Breast epithelium (tissue), 4 donors: ENCODE measurements at regions of chr11 and their contacts with region 1.

Region 1: GRCh38 chr11:118277306-118277705 is 13.2 kb upstream of the MPZL2 start:
- DNase-seq: peak in 1 of 2 donors; percentile 31
- H3K4me3 ChIP-seq: no peak overlapping the region
- H3K27ac ChIP-seq: peak overlapping the region; percentile 2 to 64
- H3K4me1 ChIP-seq: peaks cover 0 to 7% of the 10 kb centered on the region in 2 donors
- H3K27me3 ChIP-seq: no peaks in the 10 kb centered on the region
- CTCF ChIP-seq: no peak
- POLR2A ChIP-seq: no peak

Region 2: DNA sequence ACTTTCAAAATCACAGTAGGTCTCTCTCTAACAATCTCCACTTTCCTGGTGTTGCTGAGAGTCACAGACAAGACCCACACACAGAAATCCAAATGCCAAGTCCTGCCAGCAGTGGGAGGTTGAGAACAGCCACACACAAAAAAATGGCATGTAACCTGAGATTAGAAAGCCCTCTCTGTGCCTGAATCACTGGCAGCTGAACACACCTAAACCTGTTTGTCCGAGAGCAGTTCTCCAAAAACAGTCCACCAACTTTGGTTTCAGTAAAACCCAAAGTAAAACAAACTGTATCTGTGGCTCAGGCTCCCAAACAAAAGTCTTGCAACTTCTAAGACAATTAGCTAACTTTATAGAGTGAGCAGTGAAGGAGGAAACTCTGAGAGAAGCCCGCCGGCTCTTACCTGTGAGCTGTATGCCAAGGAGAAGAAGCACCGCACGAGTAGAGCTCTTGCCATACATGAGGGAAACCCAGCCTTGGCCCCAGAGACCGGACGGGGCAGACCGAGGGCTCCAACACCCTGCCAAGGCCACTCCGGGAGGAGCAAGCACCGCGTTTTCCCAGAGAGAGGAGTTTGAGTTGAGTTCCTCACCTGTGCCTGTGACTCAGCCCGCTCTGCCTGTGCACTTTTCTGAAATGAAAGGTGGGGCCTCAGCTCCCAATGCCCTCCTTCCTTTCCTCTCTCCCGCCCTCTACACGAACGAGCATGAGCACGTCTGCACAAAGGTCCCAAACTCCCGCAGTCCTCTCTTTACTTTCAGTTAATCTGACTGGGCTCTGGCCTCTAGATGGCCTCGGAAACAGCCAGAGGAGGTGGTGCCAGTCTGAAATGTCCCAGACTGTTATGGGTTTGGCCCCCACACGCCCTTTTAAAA is 13.4 kb before region 1 on chr11 and contains the start of gene MPZL2:
- intact Hi-C with region 1: loop called (anchors 1 kb)
- DNase-seq: peak; percentile 66 to 82
- H3K4me3 ChIP-seq: peak within 1 kb of the TSS; percentile 33 to 70 (median 51)
- H3K27ac ChIP-seq: peak within 1 kb of the TSS; percentile 89 to 93
- H3K4me1 ChIP-seq: peaks cover 6% of the 10 kb centered on the region in 2 donors
- H3K27me3 ChIP-seq: no peaks in the 10 kb centered on the region
- CTCF ChIP-seq: no peak
- POLR2A ChIP-seq: peak; percentile 45
- total RNA-seq, gene MPZL2: 4.6 to 73.1 (median 70.7) TPM